Mammary epithelial cell (primary cell): ENCODE measurements at regions of chr11 and their contacts with region 1.

Region 1: GRCh38 chr11:45180179-45180842 is 33.9 kb downstream of the PRDM11 start:
- DNase-seq: peak; percentile 25
- H3K4me3 ChIP-seq: peak overlapping the region in 2 of 3 experiments; percentile 46 to 49
- H3K27ac ChIP-seq: no peak overlapping the region
- H3K4me1 ChIP-seq: peaks cover 21% of the 10 kb centered on the region
- H3K27me3 ChIP-seq: no peaks in the 10 kb centered on the region
- CTCF ChIP-seq: peak; percentile 10 to 50

Region 2: GRCh38 chr11:45147017-45147728 is 33.1 kb before region 1 on chr11:
- CTCF ChIA-PET with region 1: no interaction called
- dilution Hi-C with region 1: no loop called
- in situ Hi-C with region 1: no loop called
- intact Hi-C with region 1: loop called (anchors 1 kb)
- DNase-seq: peak; percentile 97
- H3K4me3 ChIP-seq: peak overlapping the region; percentile 40 to 69 (median 63)
- H3K27ac ChIP-seq: peak overlapping the region; percentile 48
- H3K4me1 ChIP-seq: peaks cover 10% of the 10 kb centered on the region
- H3K27me3 ChIP-seq: no peaks in the 10 kb centered on the region
- CTCF ChIP-seq: no peak

Region 3: DNA sequence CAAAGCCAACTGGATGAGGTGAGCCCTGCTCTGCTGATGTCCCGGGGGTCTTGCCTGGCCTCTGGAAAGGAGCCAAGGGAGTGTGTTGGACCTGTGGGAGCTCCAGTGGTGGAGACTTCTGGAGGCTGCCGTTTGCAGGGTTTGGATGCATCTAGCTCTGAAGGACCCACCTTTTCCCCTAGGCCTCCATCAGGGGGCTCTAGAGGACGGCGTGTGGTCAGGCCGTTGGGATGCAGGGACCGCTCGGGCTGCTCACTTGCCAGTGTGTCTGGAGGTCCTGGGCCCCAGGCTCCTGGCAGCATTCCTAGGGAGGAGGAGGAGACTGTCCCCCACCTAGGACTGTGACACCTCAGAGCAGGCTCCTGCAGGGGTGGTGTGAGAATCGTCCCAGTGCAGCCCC is 24.4 kb after region 1 on chr11:
- CTCF ChIA-PET with region 1: no interaction called
- dilution Hi-C with region 1: no loop called
- in situ Hi-C with region 1: no loop called
- intact Hi-C with region 1: no loop called
- DNase-seq: no peak
- H3K4me3 ChIP-seq: no peak overlapping the region
- H3K27ac ChIP-seq: no peak overlapping the region
- H3K4me1 ChIP-seq: no peaks in the 10 kb centered on the region
- H3K27me3 ChIP-seq: no peaks in the 10 kb centered on the region
- CTCF ChIP-seq: no peak